Heart left ventricle (tissue), 16 donors: ENCODE measurements at regions of chr16 and their contacts with region 1.

Region 1: DNA sequence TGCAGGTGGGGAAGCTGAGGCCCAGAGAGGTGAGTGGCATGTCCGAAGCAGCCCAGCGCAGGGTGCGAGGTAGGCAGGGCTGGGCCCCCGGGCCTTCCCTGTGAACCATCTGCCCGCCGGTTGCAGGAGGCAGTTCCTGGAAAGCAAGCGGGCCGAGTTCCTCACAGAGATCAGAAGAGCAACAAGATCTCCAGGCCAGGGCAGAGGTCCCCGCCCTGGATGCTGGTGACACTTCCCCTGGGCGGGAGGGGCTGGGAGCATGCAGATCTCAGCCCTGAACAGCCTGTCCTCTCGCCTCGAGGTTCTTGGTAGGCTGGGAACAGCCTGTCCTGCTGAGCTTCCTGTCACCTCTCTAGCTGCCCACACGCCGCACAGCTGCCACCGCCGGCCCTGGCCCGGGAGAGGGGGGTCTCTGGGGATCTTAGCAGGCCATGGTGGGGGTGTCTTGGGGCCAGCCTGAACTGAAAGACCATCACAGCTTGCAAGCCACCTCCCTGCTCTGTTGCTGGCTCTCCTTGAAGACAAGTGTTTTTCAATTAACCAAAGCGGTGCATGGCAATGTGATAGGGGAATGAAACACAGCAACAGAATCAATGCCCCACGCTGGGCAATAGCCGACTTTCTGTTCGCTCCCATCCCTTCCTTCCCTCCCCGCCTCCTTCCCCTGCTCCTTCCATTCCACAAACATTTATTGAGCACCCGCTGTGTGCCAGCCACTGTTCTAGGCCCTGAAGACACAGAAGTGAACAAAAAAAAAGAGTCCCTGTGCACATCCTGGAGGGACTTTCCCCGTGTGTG is 31.7 kb downstream of the SOCS1 start:
- DNase-seq: peak; percentile 33 to 90 (median 77)
- ATAC-seq: peak; percentile 94 to 98 (median 96)
- H3K4me3 ChIP-seq: no peak overlapping the region
- H3K27ac ChIP-seq: peak overlapping the region in 6 of 12 donors; percentile 54 to 88 (median 75)
- H3K4me1 ChIP-seq: peaks cover 0 to 34% (median 10%) of the 10 kb centered on the region in 12 donors
- H3K27me3 ChIP-seq: no peaks in the 10 kb centered on the region
- CTCF ChIP-seq: no peak
- POLR2A ChIP-seq: no peak

Region 2: GRCh38 chr16:11175787-11176341 is 48.4 kb before region 1 on chr16:
- intact Hi-C with region 1: loop called in 1 of 10 experiments (anchors 10 kb)
- DNase-seq: no peak
- ATAC-seq: no peak
- H3K4me3 ChIP-seq: no peak overlapping the region
- H3K27ac ChIP-seq: no peak overlapping the region
- H3K4me1 ChIP-seq: peaks cover 0 to 15% (median 0%) of the 10 kb centered on the region in 12 donors
- H3K27me3 ChIP-seq: no peaks in the 10 kb centered on the region
- CTCF ChIP-seq: no peak
- POLR2A ChIP-seq: no peak

Region 3: GRCh38 chr16:11871193-11871592 is 646.9 kb after region 1 on chr16:
- intact Hi-C with region 1: no loop called
- DNase-seq: no peak
- ATAC-seq: peak in 3 of 4 donors; percentile 39 to 58 (median 42)
- H3K4me3 ChIP-seq: no peak overlapping the region
- H3K27ac ChIP-seq: peak overlapping the region in 5 of 12 donors; percentile 0 to 21 (median 4)
- H3K4me1 ChIP-seq: peaks cover 0 to 31% (median 9%) of the 10 kb centered on the region in 12 donors
- H3K27me3 ChIP-seq: no peaks in the 10 kb centered on the region
- CTCF ChIP-seq: peak in 7 of 12 donors; percentile 8 to 42 (median 24)
- POLR2A ChIP-seq: no peak